RWPE1 (cell line): ENCODE measurements at regions of chr19 and their contacts with region 1.

Region 1: DNA sequence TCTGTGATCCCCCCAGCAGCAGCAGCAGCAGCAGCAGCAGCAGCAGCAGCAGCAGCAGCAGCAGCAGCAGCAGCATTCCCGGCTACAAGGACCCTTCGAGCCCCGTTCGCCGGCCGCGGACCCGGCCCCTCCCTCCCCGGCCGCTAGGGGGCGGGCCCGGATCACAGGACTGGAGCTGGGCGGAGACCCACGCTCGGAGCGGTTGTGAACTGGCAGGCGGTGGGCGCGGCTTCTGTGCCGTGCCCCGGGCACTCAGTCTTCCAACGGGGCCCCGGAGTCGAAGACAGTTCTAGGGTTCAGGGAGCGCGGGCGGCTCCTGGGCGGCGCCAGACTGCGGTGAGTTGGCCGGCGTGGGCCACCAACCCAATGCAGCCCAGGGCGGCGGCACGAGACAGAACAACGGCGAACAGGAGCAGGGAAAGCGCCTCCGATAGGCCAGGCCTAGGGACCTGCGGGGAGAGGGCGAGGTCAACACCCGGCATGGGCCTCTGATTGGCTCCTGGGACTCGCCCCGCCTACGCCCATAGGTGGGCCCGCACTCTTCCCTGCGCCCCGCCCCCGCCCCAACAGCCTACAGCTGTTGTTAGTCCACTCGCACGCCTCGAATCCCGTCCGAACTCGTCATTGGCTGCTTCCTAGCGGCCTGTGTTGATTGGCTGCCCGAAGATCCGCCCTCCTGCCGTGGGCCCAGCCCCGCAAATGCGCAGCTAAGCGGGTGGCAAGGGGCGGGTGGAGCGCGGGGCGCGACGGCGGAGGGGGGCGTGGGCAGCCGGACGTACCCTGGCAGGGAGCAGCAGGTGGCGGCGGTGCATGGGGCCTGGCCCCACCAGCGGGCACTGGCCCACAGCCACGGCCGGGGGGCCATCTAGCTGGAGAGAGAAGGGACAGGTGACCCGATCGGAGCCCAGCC is 1.4 kb upstream of the SIX5 start:
- DNase-seq: peak; percentile 95
- H3K27ac ChIP-seq: peak overlapping the region; percentile 98
- CTCF ChIP-seq: peak; percentile 84

Region 2: GRCh38 chr19:45717166-45717982 is 53.1 kb before region 1 on chr19:
- CTCF ChIA-PET with region 1: interaction called, 4 read pairs
- POLR2A ChIA-PET with region 1: interaction called, 11 read pairs
- DNase-seq: peak; percentile 98
- H3K27ac ChIP-seq: peak overlapping the region; percentile 92
- CTCF ChIP-seq: no peak

Region 3: GRCh38 chr19:45798995-45799517 is 28.6 kb after region 1 on chr19:
- CTCF ChIA-PET with region 1: interaction called, 41 read pairs
- POLR2A ChIA-PET with region 1: interaction called, 3 read pairs
- DNase-seq: peak; percentile 79
- H3K27ac ChIP-seq: peak overlapping the region; percentile 61
- CTCF ChIP-seq: peak; percentile 87

Region 4: DNA sequence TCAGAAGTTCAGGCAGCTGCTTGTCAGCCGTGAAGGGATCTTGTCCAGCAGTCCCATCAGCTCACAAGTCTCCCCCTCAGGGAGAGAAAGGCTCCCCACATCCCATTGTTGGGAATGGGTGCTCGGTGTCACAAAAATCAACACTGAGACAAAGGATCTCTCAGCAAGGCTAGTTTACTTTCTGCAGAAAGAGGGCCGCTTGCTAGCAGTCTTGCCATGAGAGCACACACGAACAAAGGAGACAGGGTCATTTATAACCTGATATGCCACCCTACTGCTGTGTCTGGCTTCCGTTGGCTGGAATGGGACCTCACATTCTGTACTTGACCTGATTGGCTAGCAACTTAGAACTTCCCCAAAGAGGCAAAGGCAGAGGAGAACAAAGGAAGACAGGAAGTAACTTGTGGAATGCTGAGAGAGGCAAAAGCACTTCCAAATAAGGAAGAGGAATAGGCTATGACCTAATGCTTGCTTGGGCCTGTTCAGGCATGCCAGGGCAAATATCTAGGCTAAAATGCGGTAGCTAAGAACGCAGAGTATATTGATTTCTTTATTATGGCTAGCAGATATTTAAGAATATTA is 362.7 kb after region 1 on chr19:
- CTCF ChIA-PET with region 1: no interaction called
- POLR2A ChIA-PET with region 1: no interaction called
- DNase-seq: peak; percentile 47
- H3K27ac ChIP-seq: peak overlapping the region; percentile 73
- CTCF ChIP-seq: no peak